OCI-LY7 (cell line): ENCODE measurements at regions of chr11 and their contacts with region 1.

Region 1: GRCh38 chr11:34926101-34926830 is 9.8 kb downstream of the PDHX start:
- DNase-seq: peak; percentile 58
- H3K4me3 ChIP-seq: no peak overlapping the region
- H3K27ac ChIP-seq: no peak overlapping the region
- H3K4me1 ChIP-seq: no peaks in the 10 kb centered on the region
- CTCF ChIP-seq: peak; percentile 97

Region 2: GRCh38 chr11:35135222-35135621 is 209.0 kb after region 1 on chr11:
- CTCF ChIA-PET with region 1: no interaction called
- POLR2A ChIA-PET with region 1: no interaction called
- intact Hi-C with region 1: no loop called
- DNase-seq: no peak
- H3K4me3 ChIP-seq: no peak overlapping the region
- H3K27ac ChIP-seq: no peak overlapping the region
- H3K4me1 ChIP-seq: peaks cover 5% of the 10 kb centered on the region
- CTCF ChIP-seq: no peak

Region 3: DNA sequence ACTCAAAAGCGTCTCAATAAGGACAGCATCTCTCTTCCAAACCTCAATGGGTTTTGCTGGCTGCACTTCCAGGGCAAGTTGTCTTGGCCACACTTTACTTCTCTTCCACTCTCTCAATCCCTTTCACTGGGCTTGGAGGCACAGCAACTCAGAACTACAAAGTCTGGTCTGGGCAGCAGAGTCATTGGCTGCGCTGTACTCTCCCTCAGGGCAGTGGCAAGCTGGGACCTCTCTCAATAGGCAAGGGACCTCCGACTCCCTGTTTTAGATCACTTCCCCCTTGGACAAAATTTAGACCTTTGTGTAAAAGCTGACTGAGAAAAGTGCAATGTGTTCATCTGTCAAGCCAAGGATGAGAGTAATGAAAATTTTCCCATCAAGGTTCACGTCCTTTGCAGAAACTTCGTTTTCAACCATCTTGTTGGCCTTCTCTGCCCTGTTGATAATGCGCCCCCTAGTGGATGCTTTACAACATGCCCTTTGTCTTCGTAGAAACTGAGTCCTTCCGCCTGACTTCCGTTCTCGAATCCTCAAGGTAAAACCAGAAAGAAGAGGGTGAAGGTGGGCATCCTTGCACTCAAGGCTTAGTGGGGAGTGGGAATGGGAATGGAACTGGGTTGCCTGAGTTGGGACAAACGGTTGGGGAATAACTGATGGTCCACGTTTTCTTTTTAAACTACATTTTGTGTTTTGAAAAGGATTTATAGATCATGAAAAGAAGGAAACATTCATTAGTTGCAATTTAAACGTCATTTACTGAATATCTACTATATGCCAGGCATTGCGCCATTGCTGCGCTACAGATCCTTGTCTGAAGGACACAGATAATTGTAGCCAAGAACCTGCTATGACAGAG is 311.8 kb after region 1 on chr11:
- CTCF ChIA-PET with region 1: interaction called, 4 read pairs
- POLR2A ChIA-PET with region 1: no interaction called
- intact Hi-C with region 1: loop called (anchors 1 kb)
- DNase-seq: peak; percentile 83
- H3K4me3 ChIP-seq: no peak overlapping the region
- H3K27ac ChIP-seq: no peak overlapping the region
- H3K4me1 ChIP-seq: peaks cover 12% of the 10 kb centered on the region
- CTCF ChIP-seq: peak; percentile 99

Region 4: GRCh38 chr11:35305670-35306382 is 379.6 kb after region 1 on chr11:
- CTCF ChIA-PET with region 1: no interaction called
- POLR2A ChIA-PET with region 1: no interaction called
- intact Hi-C with region 1: loop called (anchors 5 kb)
- DNase-seq: peak; percentile 42
- H3K4me3 ChIP-seq: no peak overlapping the region
- H3K27ac ChIP-seq: no peak overlapping the region
- H3K4me1 ChIP-seq: no peaks in the 10 kb centered on the region
- CTCF ChIP-seq: peak; percentile 73